Panc1 (cell line): ENCODE measurements at regions of chr2 and their contacts with region 1.

Region 1: GRCh38 chr2:33552758-33553461 is 46.2 kb downstream of the FAM98A start:
- DNase-seq: no peak
- ATAC-seq: no peak
- H3K4me3 ChIP-seq: no peak overlapping the region
- H3K27ac ChIP-seq: no peak overlapping the region
- H3K4me1 ChIP-seq: no peaks in the 10 kb centered on the region
- H3K27me3 ChIP-seq: no peaks in the 10 kb centered on the region
- CTCF ChIP-seq: no peak

Region 2: DNA sequence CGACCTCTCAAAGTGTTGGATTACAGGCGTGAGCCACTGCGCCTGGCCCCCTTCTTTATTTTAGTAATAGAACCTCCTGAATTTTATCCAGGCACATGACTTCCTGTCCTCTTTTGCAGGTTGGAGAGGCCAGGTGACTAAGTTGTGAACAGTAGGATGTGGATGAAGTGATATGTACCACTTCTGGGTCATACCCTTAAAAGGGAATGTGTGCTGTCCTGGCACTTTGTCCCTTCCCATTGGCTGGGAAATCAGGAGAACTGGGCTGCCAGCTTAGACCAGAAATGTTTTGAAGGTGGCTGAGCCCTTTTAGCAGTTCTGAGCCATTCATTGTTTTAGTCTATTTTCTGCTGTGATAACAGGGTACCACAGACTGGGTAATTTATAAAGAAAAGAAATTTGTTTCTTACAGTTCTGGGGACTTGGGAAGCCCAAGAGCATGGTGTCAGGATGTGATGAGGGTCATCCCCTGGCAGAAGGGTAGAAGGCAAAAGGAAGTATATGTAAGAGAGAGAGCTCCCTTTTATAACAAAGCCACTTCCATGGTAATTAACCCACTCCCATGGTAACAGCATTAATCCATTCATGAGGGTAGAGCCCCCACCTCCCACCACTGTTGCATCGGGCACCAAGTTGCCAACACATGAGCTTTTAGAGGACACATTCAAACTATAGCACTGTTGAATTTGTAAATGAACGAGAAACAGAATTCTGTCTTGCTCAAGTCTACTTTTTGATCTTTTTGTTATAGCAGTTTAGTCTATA is 845.9 kb before region 1 on chr2:
- CTCF ChIA-PET with region 1: no interaction called
- POLR2A ChIA-PET with region 1: no interaction called
- in situ Hi-C with region 1: no loop called
- intact Hi-C with region 1: loop called (anchors 5 kb)
- DNase-seq: no peak
- ATAC-seq: no peak
- H3K4me3 ChIP-seq: no peak overlapping the region
- H3K27ac ChIP-seq: no peak overlapping the region
- H3K4me1 ChIP-seq: no peaks in the 10 kb centered on the region
- H3K27me3 ChIP-seq: no peaks in the 10 kb centered on the region
- CTCF ChIP-seq: no peak

Region 3: GRCh38 chr2:33521791-33522281 is 31.1 kb before region 1 on chr2:
- CTCF ChIA-PET with region 1: no interaction called
- POLR2A ChIA-PET with region 1: no interaction called
- in situ Hi-C with region 1: no loop called
- intact Hi-C with region 1: no loop called
- DNase-seq: no peak
- ATAC-seq: no peak
- H3K4me3 ChIP-seq: no peak overlapping the region
- H3K27ac ChIP-seq: no peak overlapping the region
- H3K4me1 ChIP-seq: no peaks in the 10 kb centered on the region
- H3K27me3 ChIP-seq: no peaks in the 10 kb centered on the region
- CTCF ChIP-seq: no peak